ENCODE measurements at regions of chr14 and their contacts with region 1.

Region 1: DNA sequence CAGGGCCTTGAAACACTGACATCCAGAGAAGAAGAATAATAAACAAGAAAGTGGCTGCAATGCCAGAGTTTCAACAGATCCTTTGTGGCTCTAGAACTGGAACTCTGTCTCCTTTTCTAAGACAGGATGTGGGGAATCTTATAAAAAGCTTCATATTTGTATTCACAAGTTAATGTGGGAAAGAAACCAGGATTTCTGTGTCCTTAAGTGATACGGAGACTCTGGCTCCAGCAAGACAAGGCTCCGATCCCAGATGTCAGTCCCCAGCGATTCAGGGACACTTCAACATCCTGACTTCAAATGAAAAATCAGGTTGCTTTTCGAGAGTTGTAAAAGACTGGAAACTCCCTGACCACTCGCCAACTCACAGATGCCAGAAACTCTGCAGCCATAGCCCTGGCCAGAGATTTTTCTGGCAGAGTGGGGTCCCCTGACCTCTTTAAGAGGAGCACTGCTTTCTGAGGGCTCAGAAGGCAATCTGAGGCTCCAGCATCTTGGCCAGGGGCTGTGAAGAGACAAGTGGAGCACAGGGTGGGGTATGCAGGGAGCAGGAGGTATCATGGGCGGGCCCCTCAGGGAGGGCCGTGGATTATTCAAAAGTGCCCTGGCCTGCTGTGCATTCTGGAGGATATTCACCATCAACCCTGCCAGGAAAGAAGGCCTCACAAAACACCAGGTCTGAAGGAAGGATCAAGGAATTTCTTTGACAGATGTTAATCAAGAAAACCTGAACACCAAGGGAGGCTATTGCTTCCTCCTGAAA is 53.3 kb downstream of the TMX1 start:
- DNase-seq: no peak
- H3K4me3 ChIP-seq: no peak overlapping the region
- H3K27ac ChIP-seq: no peak overlapping the region
- H3K4me1 ChIP-seq: peaks cover 9% of the 10 kb centered on the region
- H3K27me3 ChIP-seq: no peaks in the 10 kb centered on the region
- CTCF ChIP-seq: no peak

Region 2: GRCh38 chr14:51069055-51069664 is 224.2 kb before region 1 on chr14:
- CTCF ChIA-PET with region 1: no interaction called
- POLR2A ChIA-PET with region 1: no interaction called
- intact Hi-C with region 1: no loop called
- DNase-seq: no peak
- H3K4me3 ChIP-seq: no peak overlapping the region
- H3K27ac ChIP-seq: no peak overlapping the region
- H3K4me1 ChIP-seq: no peaks in the 10 kb centered on the region
- H3K27me3 ChIP-seq: no peaks in the 10 kb centered on the region
- CTCF ChIP-seq: no peak

Region 3: GRCh38 chr14:51342241-51342691 is 48.9 kb after region 1 on chr14:
- CTCF ChIA-PET with region 1: no interaction called
- POLR2A ChIA-PET with region 1: no interaction called
- intact Hi-C with region 1: loop called (anchors 2 kb)
- DNase-seq: peak; percentile 25 to 84
- H3K4me3 ChIP-seq: no peak overlapping the region
- H3K27ac ChIP-seq: peak overlapping the region; percentile 61
- H3K4me1 ChIP-seq: peaks cover 19% of the 10 kb centered on the region
- H3K27me3 ChIP-seq: no peaks in the 10 kb centered on the region
- CTCF ChIP-seq: no peak

Region 4: DNA sequence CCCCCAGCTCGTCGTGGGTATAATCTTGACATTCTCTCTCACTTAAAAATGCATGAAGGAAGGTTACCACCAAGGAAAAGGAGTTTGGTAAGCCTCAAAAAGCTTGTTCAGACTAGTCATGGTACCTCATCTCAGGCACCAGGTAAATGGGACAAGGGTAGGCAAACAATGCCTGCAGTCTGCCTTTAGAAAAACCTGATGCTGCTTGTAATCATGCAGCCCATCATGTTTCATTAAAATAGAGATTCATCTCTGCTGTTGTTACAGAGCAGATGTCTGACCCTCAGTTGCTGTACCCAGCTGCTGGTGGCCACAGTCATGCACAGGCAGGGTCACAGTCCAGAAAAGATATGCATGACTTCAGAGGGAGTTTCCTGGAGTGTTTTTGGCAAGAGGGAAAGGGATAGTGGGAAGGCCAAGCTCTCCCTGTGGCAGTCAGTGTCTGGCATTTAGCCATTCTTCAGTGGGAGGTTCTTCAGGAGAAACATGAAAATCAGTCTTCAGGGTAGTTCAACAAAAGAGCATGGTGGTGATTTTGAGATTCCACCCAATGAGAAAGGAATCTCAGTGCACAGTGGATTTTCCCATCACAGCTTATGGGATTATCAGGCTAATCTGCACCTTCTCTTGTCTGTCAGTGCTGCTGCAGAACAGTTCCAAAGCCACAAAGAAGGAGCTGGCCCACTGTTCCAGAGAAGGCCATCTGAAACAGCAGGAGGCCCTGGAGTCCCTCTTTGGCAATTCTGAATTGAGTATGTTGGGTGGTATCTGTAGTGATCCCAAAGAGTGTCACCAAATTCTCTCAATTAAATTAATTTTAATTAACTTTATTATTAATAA is 155.7 kb after region 1 on chr14:
- CTCF ChIA-PET with region 1: no interaction called
- POLR2A ChIA-PET with region 1: no interaction called
- intact Hi-C with region 1: loop called (anchors 10 kb)
- DNase-seq: no peak
- H3K4me3 ChIP-seq: no peak overlapping the region
- H3K27ac ChIP-seq: no peak overlapping the region
- H3K4me1 ChIP-seq: peaks cover 6% of the 10 kb centered on the region; the same call in 1 of the 2 replicates
- H3K27me3 ChIP-seq: no peaks in the 10 kb centered on the region
- CTCF ChIP-seq: no peak

Measured in PC-9 (cell line).